ENCODE measurements at regions of chr19 and their contacts with region 1.

Region 1: GRCh38 chr19:13150187-13150930 is at the starts of genes IER2 and STX10:
- DNase-seq: peak; percentile 84 to 93 (median 92)
- ATAC-seq: peak; percentile 72
- H3K4me3 ChIP-seq: peak within 1 kb of the TSS; percentile 96
- H3K4me3 Mint-ChIP-seq: peak within 1 kb of the TSS; percentile 94 to 100 (median 98)
- H3K27ac ChIP-seq: peak within 1 kb of the TSS; percentile 96
- H3K27ac Mint-ChIP-seq: peak within 1 kb of the TSS; percentile 95 to 99 (median 97)
- H3K4me1 ChIP-seq: peaks cover 9 to 11% of the 10 kb centered on the region in 2 donors
- H3K4me1 Mint-ChIP-seq: peaks cover 6 to 42% (median 18%) of the 10 kb centered on the region in 7 donors
- H3K27me3 ChIP-seq: no peaks in the 10 kb centered on the region
- H3K27me3 Mint-ChIP-seq: peaks cover 0 to 17% (median 0%) of the 10 kb centered on the region in 5 donors
- total RNA-seq, gene IER2: 135 to 558 (median 246) TPM
- total RNA-seq, gene STX10: 42.6 to 76.2 (median 68.5) TPM

Region 2: DNA sequence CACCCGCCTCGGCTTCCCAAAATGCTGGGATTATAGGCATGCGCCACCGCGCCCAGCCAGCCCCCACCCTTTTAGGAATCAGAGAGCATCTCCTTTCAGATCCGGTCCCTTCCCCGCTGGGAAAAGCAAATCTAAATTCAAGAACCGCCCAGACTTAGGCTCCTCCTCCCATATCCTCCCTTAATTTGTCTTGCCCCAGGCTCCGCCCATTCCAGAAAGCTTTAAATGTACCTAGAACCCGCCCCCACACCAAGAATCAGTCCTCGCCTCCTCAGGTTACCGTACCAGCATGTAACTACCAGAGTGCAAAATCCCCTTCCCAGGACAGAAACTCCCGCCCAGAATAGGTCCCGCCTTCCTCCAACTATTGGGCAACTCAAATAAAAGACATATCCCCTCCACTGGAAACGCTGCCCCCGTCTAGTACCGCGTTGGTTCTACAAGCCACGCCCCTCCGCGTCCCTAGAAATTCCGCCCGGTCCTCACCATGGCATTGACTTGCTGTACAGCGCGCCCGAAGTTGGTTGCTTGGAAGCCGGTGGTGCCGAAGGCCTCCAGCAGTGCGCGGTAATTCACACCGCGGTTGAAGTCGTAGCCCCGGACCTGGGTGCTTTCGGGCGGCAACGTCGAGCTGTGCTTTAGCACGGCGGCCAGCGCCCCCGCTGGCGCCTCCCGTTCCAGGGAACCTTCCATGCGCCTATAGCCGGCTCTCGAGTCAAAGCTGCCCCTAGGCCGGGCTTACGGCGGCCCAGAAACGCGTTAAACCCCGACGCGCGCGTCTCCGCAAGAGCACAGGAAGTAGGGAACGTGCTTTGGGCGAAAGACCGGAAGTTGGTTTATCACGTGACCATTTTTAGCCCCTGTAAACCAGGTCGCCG is 469.0 kb before region 1 on chr19 and contains the start of gene DHPS:
- CTCF ChIA-PET with region 1: no interaction called
- POLR2A ChIA-PET with region 1: no interaction called
- intact Hi-C with region 1: loop called in 1 of 2 experiments (anchors 2 kb)
- DNase-seq: peak; percentile 58 to 95 (median 93)
- ATAC-seq: peak; percentile 85
- H3K4me3 ChIP-seq: peak within 1 kb of the TSS; percentile 100
- H3K4me3 Mint-ChIP-seq: peak within 1 kb of the TSS; percentile 92 to 99 (median 96)
- H3K27ac ChIP-seq: peak within 1 kb of the TSS; percentile 95
- H3K27ac Mint-ChIP-seq: peak within 1 kb of the TSS; percentile 86 to 98 (median 94)
- H3K4me1 ChIP-seq: peaks cover 6 to 19% of the 10 kb centered on the region in 2 donors
- H3K4me1 Mint-ChIP-seq: peaks cover 18 to 34% (median 26%) of the 10 kb centered on the region in 7 donors
- H3K27me3 ChIP-seq: no peaks in the 10 kb centered on the region
- H3K27me3 Mint-ChIP-seq: no peaks in the 10 kb centered on the region
- total RNA-seq, gene DHPS: 125 to 223 (median 174) TPM

Region 3: GRCh38 chr19:13104360-13104847 is 46.0 kb before region 1 on chr19:
- CTCF ChIA-PET with region 1: interaction called, 6 read pairs
- POLR2A ChIA-PET with region 1: interaction called, 43 read pairs
- intact Hi-C with region 1: loop called (anchors 1 to 2 kb)
- DNase-seq: peak; percentile 48 to 78 (median 62)
- ATAC-seq: peak; percentile 67
- H3K4me3 ChIP-seq: peak overlapping the region; percentile 82
- H3K4me3 Mint-ChIP-seq: peak overlapping the region; percentile 80 to 97 (median 93)
- H3K27ac ChIP-seq: peak overlapping the region; percentile 74
- H3K27ac Mint-ChIP-seq: peak overlapping the region; percentile 71 to 94 (median 87)
- H3K4me1 ChIP-seq: peaks cover 46 to 48% of the 10 kb centered on the region in 2 donors
- H3K4me1 Mint-ChIP-seq: peaks cover 0 to 36% (median 30%) of the 10 kb centered on the region in 7 donors
- H3K27me3 ChIP-seq: no peaks in the 10 kb centered on the region
- H3K27me3 Mint-ChIP-seq: peaks cover 0 to 3% (median 0%) of the 10 kb centered on the region in 5 donors

Region 4: GRCh38 chr19:13181747-13182388 is 31.5 kb after region 1 on chr19:
- CTCF ChIA-PET with region 1: interaction called, 15 read pairs
- POLR2A ChIA-PET with region 1: interaction called, 48 read pairs
- intact Hi-C with region 1: no loop called
- DNase-seq: no peak
- ATAC-seq: peak; percentile 71
- H3K4me3 ChIP-seq: no peak overlapping the region
- H3K4me3 Mint-ChIP-seq: peak overlapping the region in 8 of 10 donors; percentile 24 to 71 (median 62)
- H3K27ac ChIP-seq: no peak overlapping the region
- H3K27ac Mint-ChIP-seq: peak overlapping the region; percentile 20 to 86 (median 76)
- H3K4me1 ChIP-seq: peaks cover 20 to 21% of the 10 kb centered on the region in 2 donors
- H3K4me1 Mint-ChIP-seq: peaks cover 14 to 43% (median 38%) of the 10 kb centered on the region in 7 donors
- H3K27me3 ChIP-seq: no peaks in the 10 kb centered on the region
- H3K27me3 Mint-ChIP-seq: no peaks in the 10 kb centered on the region

Region 5: DNA sequence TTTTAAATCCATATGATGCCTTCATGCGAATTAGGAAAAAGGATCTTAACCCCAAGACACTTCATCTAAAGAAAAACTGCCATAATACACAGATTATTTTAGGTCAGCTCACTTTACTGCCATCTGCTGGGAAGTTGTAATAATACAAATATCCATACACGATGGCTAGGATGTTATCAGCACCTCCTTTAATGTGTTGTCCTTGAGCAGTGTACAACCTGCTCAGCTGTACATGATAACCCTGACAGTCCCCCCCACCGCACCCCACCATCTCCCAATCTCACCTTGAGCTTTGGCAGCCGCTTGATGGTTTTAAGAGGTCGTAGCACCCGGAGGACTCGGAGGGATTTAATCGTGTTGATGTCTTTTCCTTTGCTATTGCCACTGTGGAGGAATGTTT is 112.1 kb after region 1 on chr19:
- CTCF ChIA-PET with region 1: interaction called, 3 read pairs
- POLR2A ChIA-PET with region 1: interaction called, 7 read pairs
- intact Hi-C with region 1: loop called in 1 of 2 experiments (anchors 1 kb)
- DNase-seq: peak in 6 of 9 donors; percentile 21 to 61 (median 52)
- ATAC-seq: peak; percentile 73
- H3K4me3 ChIP-seq: no peak overlapping the region
- H3K4me3 Mint-ChIP-seq: no peak overlapping the region
- H3K27ac ChIP-seq: no peak overlapping the region
- H3K27ac Mint-ChIP-seq: peak overlapping the region in 3 of 9 donors; percentile 5 to 84 (median 47)
- H3K4me1 ChIP-seq: no peaks in the 10 kb centered on the region
- H3K4me1 Mint-ChIP-seq: peaks cover 0 to 15% (median 0%) of the 10 kb centered on the region in 7 donors
- H3K27me3 ChIP-seq: no peaks in the 10 kb centered on the region
- H3K27me3 Mint-ChIP-seq: peaks cover 0 to 21% (median 10%) of the 10 kb centered on the region in 5 donors

Region 6: DNA sequence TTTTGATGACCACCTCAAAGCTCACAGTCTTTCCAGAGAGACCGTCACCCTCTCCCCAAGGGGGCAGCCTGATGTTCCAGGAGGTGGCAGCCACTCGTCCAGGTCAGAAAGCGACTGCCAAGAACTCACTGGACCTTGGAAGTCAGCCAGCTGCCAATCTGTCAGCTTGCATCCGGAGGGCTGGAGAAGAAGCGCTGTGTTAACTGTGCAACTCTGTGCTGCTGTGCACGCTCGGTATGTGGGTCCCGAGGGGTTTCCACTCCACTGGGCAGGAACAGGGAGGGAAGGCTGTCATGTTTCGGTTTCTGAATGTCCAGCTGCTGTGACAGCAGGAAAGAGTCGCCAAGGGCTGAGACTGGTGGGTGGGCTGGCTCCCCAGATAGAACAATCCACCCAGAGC is 266.7 kb after region 1 on chr19:
- CTCF ChIA-PET with region 1: no interaction called
- POLR2A ChIA-PET with region 1: no interaction called
- intact Hi-C with region 1: no loop called
- DNase-seq: no peak
- ATAC-seq: no peak
- H3K4me3 ChIP-seq: no peak overlapping the region
- H3K4me3 Mint-ChIP-seq: no peak overlapping the region
- H3K27ac ChIP-seq: no peak overlapping the region
- H3K27ac Mint-ChIP-seq: no peak overlapping the region
- H3K4me1 ChIP-seq: no peaks in the 10 kb centered on the region
- H3K4me1 Mint-ChIP-seq: peaks cover 0 to under 1% (median 0%) of the 10 kb centered on the region in 7 donors
- H3K27me3 ChIP-seq: no peaks in the 10 kb centered on the region
- H3K27me3 Mint-ChIP-seq: peaks cover 0 to 23% (median 16%) of the 10 kb centered on the region in 5 donors

Region 7: GRCh38 chr19:14006243-14006765 is 855.9 kb after region 1 on chr19 and contains the start of gene RFX1:
- CTCF ChIA-PET with region 1: no interaction called
- POLR2A ChIA-PET with region 1: no interaction called
- intact Hi-C with region 1: loop called in 1 of 2 experiments (anchors 2 kb)
- DNase-seq: peak; percentile 99 to 100 (median 100)
- ATAC-seq: peak; percentile 79
- H3K4me3 ChIP-seq: peak within 1 kb of the TSS; percentile 77
- H3K4me3 Mint-ChIP-seq: peak within 1 kb of the TSS; percentile 91 to 98 (median 96)
- H3K27ac ChIP-seq: peak within 1 kb of the TSS; percentile 99
- H3K27ac Mint-ChIP-seq: peak within 1 kb of the TSS; percentile 98 to 100 (median 100)
- H3K4me1 ChIP-seq: peaks cover 36 to 41% of the 10 kb centered on the region in 2 donors
- H3K4me1 Mint-ChIP-seq: peaks cover 26 to 47% (median 38%) of the 10 kb centered on the region in 7 donors
- H3K27me3 ChIP-seq: no peaks in the 10 kb centered on the region
- H3K27me3 Mint-ChIP-seq: no peaks in the 10 kb centered on the region
- total RNA-seq, gene RFX1: 15.7 to 23.5 (median 20.5) TPM

Measured in naive thymus-derived CD4-positive, alpha-beta T cell (primary cell).